Panc1 (cell line): ENCODE measurements at regions of chr2 and their contacts with region 1.

Region 1: DNA sequence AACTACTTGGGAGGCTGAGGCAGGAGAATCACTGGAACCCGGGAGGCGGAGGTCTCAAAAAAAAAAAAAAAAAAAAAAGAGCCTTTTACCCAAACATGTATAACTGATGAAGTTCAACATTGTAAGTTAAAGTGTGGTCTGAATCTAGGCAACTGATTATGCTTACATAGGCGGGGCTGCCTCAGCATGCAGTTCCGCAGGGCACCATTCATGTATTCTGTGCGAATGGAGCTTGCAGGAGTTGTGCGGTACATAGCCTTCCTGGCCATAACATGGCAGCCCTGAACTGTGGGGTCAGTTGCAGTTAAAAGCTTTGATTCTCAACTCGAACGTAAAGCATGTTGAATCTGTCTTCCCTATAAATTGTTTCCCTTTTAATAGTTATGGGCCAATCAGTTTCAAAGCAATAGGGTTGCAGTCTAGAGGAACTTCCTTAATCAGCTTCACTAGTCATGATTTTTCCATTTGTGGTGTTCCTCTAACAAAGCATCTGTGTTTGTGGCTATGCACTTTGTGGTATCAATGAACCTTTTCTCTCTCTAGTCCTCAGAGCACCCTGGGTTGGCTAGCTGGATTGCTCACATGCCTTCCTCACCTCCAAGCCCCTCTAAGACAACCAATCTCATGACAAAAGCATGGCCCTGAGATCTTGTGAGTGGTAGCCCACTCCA is 30.6 kb upstream of the CEP68 start:
- DNase-seq: no peak
- ATAC-seq: no peak
- H3K4me3 ChIP-seq: no peak overlapping the region
- H3K27ac ChIP-seq: no peak overlapping the region
- H3K4me1 ChIP-seq: no peaks in the 10 kb centered on the region
- H3K27me3 ChIP-seq: no peaks in the 10 kb centered on the region
- CTCF ChIP-seq: no peak

Region 2: DNA sequence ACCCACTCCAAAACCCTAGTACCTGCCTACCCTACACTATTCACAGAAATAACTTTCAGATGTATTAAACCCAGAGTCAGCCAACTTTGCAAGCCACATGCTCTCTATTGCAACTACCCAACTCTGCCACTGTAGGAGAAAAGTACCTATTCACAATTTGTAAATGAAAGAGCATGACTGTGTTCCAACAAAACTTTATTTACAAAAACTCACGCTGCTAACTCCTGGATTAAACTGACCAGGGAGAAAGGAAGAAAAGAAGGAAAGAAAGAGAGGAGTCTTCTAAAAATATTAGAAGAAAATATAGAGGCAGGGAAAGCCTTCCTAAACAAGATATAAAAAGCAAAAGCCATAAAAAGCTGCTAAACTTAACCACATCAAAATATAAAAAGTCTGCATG is 11.8 kb before region 1 on chr2:
- CTCF ChIA-PET with region 1: no interaction called
- POLR2A ChIA-PET with region 1: no interaction called
- in situ Hi-C with region 1: no loop called
- intact Hi-C with region 1: no loop called
- DNase-seq: no peak
- ATAC-seq: no peak
- H3K4me3 ChIP-seq: no peak overlapping the region
- H3K27ac ChIP-seq: no peak overlapping the region
- H3K4me1 ChIP-seq: no peaks in the 10 kb centered on the region
- H3K27me3 ChIP-seq: no peaks in the 10 kb centered on the region
- CTCF ChIP-seq: no peak

Region 3: DNA sequence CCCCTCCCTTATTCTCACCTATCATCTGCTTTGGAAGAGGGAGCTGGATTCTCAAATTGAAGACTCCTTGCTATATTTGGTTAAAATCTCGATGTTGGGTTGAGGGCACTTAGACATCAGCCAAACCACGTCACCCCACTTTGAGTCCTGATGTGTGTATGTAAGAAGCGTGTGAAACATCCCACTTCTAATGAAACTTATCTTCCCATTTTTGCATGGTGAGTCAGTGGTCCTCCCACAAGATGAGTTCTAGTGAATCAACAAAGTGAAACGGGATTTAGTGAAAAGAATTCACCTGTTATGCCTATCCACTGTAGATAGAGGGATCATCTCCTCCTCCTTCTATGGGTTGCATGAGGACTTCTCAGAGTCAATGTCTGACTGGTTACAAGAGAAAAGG is 458.2 kb after region 1 on chr2:
- CTCF ChIA-PET with region 1: no interaction called
- POLR2A ChIA-PET with region 1: no interaction called
- in situ Hi-C with region 1: no loop called
- intact Hi-C with region 1: no loop called
- DNase-seq: no peak
- ATAC-seq: no peak
- H3K4me3 ChIP-seq: no peak overlapping the region
- H3K27ac ChIP-seq: no peak overlapping the region
- H3K4me1 ChIP-seq: no peaks in the 10 kb centered on the region
- H3K27me3 ChIP-seq: no peaks in the 10 kb centered on the region
- CTCF ChIP-seq: no peak

Region 4: GRCh38 chr2:66772618-66773017 is 1747.0 kb after region 1 on chr2:
- CTCF ChIA-PET with region 1: no interaction called
- POLR2A ChIA-PET with region 1: interaction called, 13 read pairs
- in situ Hi-C with region 1: no loop called
- intact Hi-C with region 1: no loop called
- DNase-seq: no peak
- ATAC-seq: no peak
- H3K4me3 ChIP-seq: no peak overlapping the region
- H3K27ac ChIP-seq: no peak overlapping the region
- H3K4me1 ChIP-seq: no peaks in the 10 kb centered on the region
- H3K27me3 ChIP-seq: no peaks in the 10 kb centered on the region
- CTCF ChIP-seq: no peak